ENCODE measurements at regions of chr7 and their contacts with region 1.

Region 1: DNA sequence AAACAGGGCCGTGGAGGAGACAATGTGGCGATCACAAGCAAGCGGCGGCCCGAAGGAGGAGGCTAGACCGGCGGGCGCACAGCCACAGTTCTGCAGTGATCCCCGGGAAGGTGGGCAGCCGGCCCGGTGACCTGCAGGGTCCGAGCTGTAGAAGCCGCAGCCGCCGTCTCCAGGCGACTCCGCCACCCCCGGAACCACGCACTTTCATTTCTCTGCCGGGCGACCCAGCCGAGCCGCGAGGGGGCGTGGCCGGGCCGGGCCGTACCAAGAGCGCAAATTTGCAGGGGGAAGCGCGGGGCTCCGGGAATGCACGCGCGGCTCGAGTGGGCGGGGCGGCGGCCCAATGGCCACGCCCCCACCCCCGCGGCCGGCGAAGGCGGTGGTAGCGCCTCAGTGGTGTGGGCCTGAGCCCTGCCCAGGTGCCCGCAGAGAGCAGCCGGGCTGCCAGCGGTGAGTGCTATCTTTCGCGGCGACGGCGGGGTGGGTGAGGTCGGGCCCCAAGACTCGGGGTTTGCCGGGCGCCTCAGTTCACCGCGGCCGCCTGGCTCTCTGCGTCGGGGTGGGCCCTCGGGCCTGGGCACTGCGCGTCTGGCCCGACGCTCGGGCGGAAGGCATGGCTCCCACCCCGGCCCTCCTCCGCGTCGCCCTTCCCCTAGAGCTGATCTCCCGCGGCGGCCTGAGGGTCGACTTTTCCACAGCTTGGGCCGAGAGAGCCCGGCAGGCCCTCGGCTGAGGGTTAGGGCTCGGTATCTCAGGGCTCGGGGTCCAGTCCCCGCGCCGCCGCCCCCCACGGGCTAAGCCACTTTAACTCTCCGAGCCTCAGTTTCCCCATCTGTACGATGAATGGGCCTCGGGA is at the start of gene POR:
- DNase-seq: peak; percentile 98
- H3K4me3 ChIP-seq: peak within 1 kb of the TSS; percentile 94 to 100 (median 98)
- H3K27ac ChIP-seq: peak within 1 kb of the TSS; percentile 87 to 94 (median 94)
- H3K4me1 ChIP-seq: peaks cover 20 to 34% (median 33%) of the 10 kb centered on the region in 4 donors
- H3K27me3 ChIP-seq: no peaks in the 10 kb centered on the region
- CTCF ChIP-seq: peak in 2 of 3 experiments; percentile 21 to 42
- EP300 ChIP-seq: no peak
- POLR2A ChIP-seq: peak; percentile 93
- total RNA-seq, gene POR: 37.8 to 71.4 (median 63.6) TPM

Region 2: GRCh38 chr7:75937958-75938786 is 23.2 kb after region 1 on chr7:
- intact Hi-C with region 1: no loop called
- DNase-seq: no peak
- H3K4me3 ChIP-seq: no peak overlapping the region
- H3K27ac ChIP-seq: no peak overlapping the region
- H3K4me1 ChIP-seq: peaks cover 8 to 19% (median 14%) of the 10 kb centered on the region in 4 donors
- H3K27me3 ChIP-seq: no peaks in the 10 kb centered on the region
- CTCF ChIP-seq: no peak
- EP300 ChIP-seq: no peak
- POLR2A ChIP-seq: no peak

Region 3: DNA sequence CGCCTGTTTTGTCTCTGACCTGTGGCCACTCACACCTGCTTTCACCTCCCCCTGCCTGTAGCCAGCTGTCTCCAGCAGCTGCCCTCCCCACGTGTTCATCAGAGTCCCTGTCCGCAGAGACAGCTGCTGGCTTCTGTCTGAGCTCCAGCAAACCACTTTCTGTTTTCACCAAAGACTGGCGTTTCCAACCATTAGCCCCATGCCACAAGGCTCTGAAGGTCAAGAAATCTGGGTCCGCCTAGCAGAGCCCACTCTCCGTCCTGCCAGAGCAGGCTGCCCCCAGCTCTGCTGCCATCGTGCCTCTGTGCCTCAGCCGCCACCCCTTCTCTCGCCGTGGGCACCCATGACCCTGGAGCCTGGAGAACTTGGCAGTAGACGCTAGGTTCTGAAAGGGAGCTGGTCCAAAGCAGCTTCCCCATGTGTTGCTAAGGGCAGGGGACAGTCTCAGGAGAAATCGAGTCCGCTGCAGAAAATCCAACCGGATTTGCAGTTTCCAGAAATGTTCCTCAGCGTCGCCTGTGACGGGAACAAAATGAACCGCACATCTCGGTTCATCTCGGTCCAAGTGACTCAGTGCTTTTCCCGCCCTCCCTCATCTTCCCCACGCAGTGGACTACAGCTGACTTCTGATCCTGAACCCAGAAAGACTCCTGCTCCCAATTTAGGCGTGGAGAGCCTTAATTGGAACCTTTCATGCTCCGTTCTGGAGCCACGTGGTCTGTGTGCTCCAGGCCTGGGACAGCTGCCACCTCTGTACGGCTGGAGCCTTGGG is 51.4 kb after region 1 on chr7:
- intact Hi-C with region 1: loop called (anchors 5 kb)
- DNase-seq: no peak
- H3K4me3 ChIP-seq: peak overlapping the region; percentile 33 to 46 (median 36)
- H3K27ac ChIP-seq: peak overlapping the region; percentile 83 to 93 (median 85)
- H3K4me1 ChIP-seq: peaks cover 58 to 78% (median 75%) of the 10 kb centered on the region in 4 donors
- H3K27me3 ChIP-seq: no peaks in the 10 kb centered on the region
- CTCF ChIP-seq: no peak
- EP300 ChIP-seq: peak; percentile 87
- POLR2A ChIP-seq: no peak

Region 4: GRCh38 chr7:75994388-75995051 is 79.6 kb after region 1 on chr7 and contains the start of gene TMEM120A:
- intact Hi-C with region 1: loop called (anchors 5 kb)
- DNase-seq: peak; percentile 99
- H3K4me3 ChIP-seq: peak within 1 kb of the TSS; percentile 72 to 88 (median 78)
- H3K27ac ChIP-seq: peak within 1 kb of the TSS; percentile 86 to 95 (median 92)
- H3K4me1 ChIP-seq: peaks cover 33 to 48% (median 43%) of the 10 kb centered on the region in 4 donors
- H3K27me3 ChIP-seq: no peaks in the 10 kb centered on the region
- CTCF ChIP-seq: peak in 2 of 3 experiments; percentile 20 to 38
- EP300 ChIP-seq: no peak
- POLR2A ChIP-seq: peak; percentile 52
- total RNA-seq, gene TMEM120A: 23.2 to 37.8 (median 31.2) TPM

Measured in esophagus muscularis mucosa (tissue), 4 donors.